HEK293T (cell line): ENCODE measurements at regions of chr11 and their contacts with region 1.

Region 1: DNA sequence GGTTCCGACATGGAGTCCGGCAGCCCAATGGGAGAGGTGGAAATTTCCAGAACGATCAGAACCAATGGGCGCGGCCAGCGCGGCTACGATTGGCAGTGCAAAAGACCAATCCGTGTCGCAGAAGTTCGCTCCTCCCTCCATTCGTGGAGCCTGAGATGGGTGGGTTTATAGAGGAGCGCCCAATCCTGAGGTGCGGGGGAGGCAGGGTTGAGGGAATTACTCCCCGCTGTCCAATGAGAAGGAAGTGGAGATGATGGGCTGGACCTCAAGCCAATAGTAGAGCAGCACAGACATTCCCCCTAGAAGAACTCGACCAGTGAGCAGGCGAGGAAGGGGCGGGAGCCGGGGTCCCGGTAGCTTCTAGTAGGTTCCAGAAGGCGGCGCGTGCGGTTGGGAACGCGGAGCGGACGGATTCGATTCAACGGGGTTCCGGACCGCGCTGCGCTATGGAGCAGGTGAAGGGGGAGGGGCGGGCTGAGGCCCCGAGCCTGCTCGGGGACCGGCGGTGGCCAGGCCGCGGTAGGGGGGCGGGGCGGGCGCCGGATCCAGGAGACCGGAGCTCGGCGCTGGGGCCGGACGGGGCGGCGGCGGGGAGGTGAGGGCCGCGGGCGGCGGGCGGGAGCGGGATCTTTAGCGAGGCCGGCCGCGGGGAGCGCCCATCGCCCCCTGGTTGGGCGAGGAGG is at the start of gene STIP1:
- DNase-seq: peak; percentile 94

Region 2: GRCh38 chr11:64165849-64166635 is 19.9 kb before region 1 on chr11 and contains the start of gene MACROD1:
- CTCF ChIA-PET with region 1: no interaction called
- POLR2A ChIA-PET with region 1: interaction called, 27 read pairs
- DNase-seq: peak; percentile 85

Region 3: GRCh38 chr11:64204464-64204989 is 18.6 kb after region 1 on chr11:
- CTCF ChIA-PET with region 1: interaction called, 18 read pairs
- POLR2A ChIA-PET with region 1: interaction called, 14 read pairs
- DNase-seq: peak; percentile 78

Region 4: GRCh38 chr11:64225612-64226506 is 39.9 kb after region 1 on chr11 and contains the starts of genes NUDT22 and TRPT1:
- CTCF ChIA-PET with region 1: interaction called, 5 read pairs
- POLR2A ChIA-PET with region 1: interaction called, 11 read pairs
- DNase-seq: peak; percentile 89

Region 5: GRCh38 chr11:64240394-64241174 is 54.6 kb after region 1 on chr11 and contains the start of gene FKBP2:
- CTCF ChIA-PET with region 1: no interaction called
- POLR2A ChIA-PET with region 1: interaction called, 13 read pairs
- DNase-seq: peak; percentile 96